ENCODE measurements at regions of chr21 and their contacts with region 1.

Region 1: DNA sequence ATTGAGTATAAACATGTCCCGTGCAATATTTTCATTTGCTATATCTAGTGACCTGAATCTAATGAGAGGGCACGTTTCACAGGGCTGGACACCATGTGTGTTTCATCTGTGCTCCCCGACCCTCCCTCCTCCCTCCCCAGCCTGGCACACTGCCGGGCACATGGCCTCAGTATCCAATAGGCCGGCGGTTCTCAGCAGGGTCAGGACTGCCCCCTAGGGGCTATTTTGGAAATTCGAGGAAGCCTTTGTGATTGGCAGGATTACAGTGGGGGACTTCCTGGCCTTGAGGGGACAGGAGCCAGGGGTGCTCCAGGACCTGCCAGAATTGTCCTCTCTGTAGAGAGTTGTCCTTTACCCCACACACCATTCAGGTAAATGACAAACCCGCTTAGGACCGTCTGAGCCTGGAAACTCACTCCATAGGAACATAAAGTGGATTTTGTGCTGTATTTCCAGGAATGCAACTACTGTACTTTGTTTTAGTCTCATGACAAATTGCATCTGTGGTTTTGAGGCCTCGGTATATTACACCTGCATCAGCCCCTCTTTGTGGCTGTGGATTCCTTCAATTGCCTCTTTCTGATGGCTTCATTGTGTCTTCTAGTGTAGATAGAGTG is 109.5 kb upstream of the SIM2 start:
- DNase-seq: peak; percentile 52 to 73 (median 68)
- H3K4me3 ChIP-seq: no peak overlapping the region
- H3K27ac ChIP-seq: no peak overlapping the region
- H3K4me1 ChIP-seq: peaks cover 0 to 3% of the 10 kb centered on the region in 2 donors
- H3K27me3 ChIP-seq: no peaks in the 10 kb centered on the region
- CTCF ChIP-seq: peak; percentile 35 to 55 (median 48)
- POLR2A ChIP-seq: no peak

Region 2: DNA sequence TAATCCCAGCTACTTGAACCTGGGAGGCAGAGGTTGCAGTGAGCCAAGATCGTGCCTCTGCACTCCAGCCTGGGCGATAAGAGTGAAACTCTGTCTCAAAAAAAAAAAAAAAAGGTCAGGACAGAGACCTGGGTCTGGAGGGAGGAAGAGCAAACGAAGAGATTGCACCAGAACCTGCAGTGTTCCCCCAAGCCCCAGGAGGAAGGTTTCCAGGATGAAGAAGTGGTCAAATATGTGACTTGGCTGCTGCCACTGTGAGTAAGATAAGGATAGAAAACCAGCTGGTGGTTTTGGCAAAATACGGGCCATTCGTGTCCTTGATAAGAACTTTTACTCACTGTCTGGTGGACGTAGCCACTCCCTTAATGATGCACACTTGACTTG is 151.7 kb before region 1 on chr21:
- intact Hi-C with region 1: no loop called
- DNase-seq: peak; percentile 38 to 93 (median 81)
- H3K4me3 ChIP-seq: no peak overlapping the region
- H3K27ac ChIP-seq: peak overlapping the region in 3 of 5 donors; percentile 12 to 68 (median 57)
- H3K4me1 ChIP-seq: no peaks in the 10 kb centered on the region
- H3K27me3 ChIP-seq: no peaks in the 10 kb centered on the region
- CTCF ChIP-seq: no peak
- POLR2A ChIP-seq: no peak

Region 3: DNA sequence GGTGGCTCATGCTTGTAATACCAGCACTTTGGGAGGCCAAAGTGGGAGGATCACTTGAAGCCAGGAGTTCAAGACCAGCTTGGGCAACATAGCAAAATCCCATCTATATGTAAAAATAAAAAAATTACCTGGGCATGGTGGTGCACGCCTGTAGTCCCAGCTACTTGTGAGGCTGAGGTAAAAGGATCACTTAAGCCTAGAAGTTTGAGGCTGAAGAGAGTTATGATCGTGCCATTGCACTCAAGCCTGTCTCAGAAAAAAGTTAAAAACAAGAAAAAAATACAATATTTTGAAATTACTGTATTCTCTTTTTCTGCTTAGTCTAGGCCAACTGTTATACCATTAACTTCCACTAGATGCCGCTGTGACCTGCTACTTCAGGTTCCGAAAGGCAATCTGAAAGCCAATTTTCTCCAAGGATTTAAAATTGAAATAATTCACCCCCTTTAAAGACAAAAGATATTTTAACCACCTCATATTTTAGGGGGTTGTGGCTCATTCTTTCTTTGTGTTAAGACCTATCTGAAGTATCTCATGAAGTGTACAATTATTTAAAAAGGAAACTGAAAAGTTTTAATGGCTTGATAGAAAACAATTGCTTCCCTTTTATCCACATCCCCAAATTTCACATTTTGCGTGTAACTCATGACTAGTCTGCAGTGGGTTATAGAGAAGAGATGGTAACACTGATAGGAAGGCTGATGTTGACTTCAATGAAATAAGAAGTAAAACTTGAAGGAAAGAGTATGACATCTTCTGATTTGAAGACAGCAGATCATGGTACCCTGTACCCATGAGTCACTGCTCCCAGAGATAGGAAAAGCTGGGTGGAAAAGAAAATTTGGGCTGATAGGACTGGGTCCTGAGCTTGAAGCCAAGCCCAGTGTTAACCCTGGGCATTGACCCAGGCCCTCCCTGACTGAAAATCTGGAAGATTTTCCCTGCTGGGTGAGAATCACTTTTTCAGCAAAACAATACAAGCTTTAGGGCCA is 85.1 kb before region 1 on chr21:
- intact Hi-C with region 1: loop called in 1 of 2 experiments (anchors 10 kb)
- DNase-seq: peak in 5 of 7 donors; percentile 25 to 57 (median 55)
- H3K4me3 ChIP-seq: no peak overlapping the region
- H3K27ac ChIP-seq: no peak overlapping the region
- H3K4me1 ChIP-seq: no peaks in the 10 kb centered on the region
- H3K27me3 ChIP-seq: peaks cover 6% of the 10 kb centered on the region
- CTCF ChIP-seq: peak; percentile 82 to 98 (median 84)
- POLR2A ChIP-seq: no peak

Region 4: GRCh38 chr21:36647279-36648093 is 58.0 kb after region 1 on chr21:
- intact Hi-C with region 1: no loop called
- DNase-seq: peak in 2 of 7 donors; percentile 6 to 20
- H3K4me3 ChIP-seq: no peak overlapping the region
- H3K27ac ChIP-seq: no peak overlapping the region
- H3K4me1 ChIP-seq: no peaks in the 10 kb centered on the region
- H3K27me3 ChIP-seq: no peaks in the 10 kb centered on the region
- CTCF ChIP-seq: no peak
- POLR2A ChIP-seq: no peak

Region 5: GRCh38 chr21:37208056-37208721 is 618.7 kb after region 1 on chr21:
- intact Hi-C with region 1: no loop called
- DNase-seq: peak; percentile 58 to 84 (median 71)
- H3K4me3 ChIP-seq: peak overlapping the region in 1 of 4 donors; percentile 16
- H3K27ac ChIP-seq: peak overlapping the region in 2 of 5 donors; percentile 69 to 71
- H3K4me1 ChIP-seq: peaks cover 5 to 12% of the 10 kb centered on the region in 2 donors
- H3K27me3 ChIP-seq: no peaks in the 10 kb centered on the region
- CTCF ChIP-seq: no peak
- POLR2A ChIP-seq: no peak

Measured in adrenal gland (tissue), 19 donors.